PC-3 (cell line): ENCODE measurements at regions of chrX and their contacts with region 1.

Region 1: GRCh38 chrX:154097597-154098541 is at the start of gene MECP2:
- DNase-seq: peak; percentile 92
- ATAC-seq: peak; percentile 90
- H3K4me3 ChIP-seq: peak within 1 kb of the TSS; percentile 99
- H3K27ac ChIP-seq: peak within 1 kb of the TSS; percentile 25; the same call in 1 of the 2 replicates
- H3K4me1 ChIP-seq: peaks cover 23% of the 10 kb centered on the region
- H3K27me3 ChIP-seq: no peaks in the 10 kb centered on the region
- CTCF ChIP-seq: no peak
- total RNA-seq, gene MECP2: 40.8 and 47.3 TPM in 2 replicates

Region 2: DNA sequence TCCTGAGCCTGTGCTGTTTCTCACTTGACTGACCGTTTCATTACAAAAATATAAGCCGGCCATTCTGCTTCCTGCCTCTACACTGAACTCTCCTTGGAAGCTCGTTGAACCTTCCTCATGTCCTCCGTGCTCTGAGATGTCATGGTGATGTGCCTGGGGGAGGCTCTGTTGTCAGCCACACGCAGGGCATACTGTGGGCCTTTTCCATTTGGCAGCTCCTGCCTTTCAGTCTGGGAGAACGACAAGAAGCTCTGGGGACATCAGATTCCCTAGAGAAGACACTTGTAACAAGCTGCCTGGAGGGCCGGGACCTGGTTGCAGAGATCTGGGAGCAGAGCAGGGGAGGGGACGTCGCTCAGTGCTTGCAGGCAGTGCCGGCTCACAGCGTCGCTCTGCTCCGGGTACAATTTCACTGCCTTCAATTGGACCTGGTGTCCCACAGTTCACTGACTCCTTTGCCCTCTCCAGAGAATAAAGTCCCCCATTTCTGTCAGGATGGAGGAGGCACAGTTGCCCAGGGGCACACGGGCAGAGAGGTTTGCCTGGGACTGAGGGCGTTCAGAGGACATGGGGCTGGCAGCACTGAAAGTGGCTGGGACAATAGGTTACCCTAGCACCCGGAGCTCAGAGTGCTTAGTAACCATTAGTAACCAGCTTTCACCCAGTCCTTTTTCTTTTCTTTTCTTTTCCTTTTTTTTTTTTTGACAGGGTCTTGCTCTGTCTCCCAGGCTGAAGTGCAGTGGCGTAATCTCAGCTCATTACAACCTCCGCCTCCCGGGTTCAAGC is 18.8 kb after region 1 on chrX:
- CTCF ChIA-PET with region 1: interaction called, 15 read pairs
- POLR2A ChIA-PET with region 1: no interaction called
- intact Hi-C with region 1: no loop called
- DNase-seq: no peak
- ATAC-seq: no peak
- H3K4me3 ChIP-seq: no peak overlapping the region
- H3K27ac ChIP-seq: no peak overlapping the region
- H3K4me1 ChIP-seq: peaks cover 5% of the 10 kb centered on the region
- H3K27me3 ChIP-seq: no peaks in the 10 kb centered on the region
- CTCF ChIP-seq: no peak